ENCODE measurements at regions of chr17 and their contacts with region 1.

Region 1: GRCh38 chr17:66508896-66509843 is 206.8 kb downstream of the PRKCA start:
- DNase-seq: peak; percentile 90
- H3K4me3 Mint-ChIP-seq: peak overlapping the region; percentile 35
- H3K27ac Mint-ChIP-seq: peak overlapping the region; percentile 79
- H3K4me1 Mint-ChIP-seq: peaks cover 41% of the 10 kb centered on the region
- H3K27me3 Mint-ChIP-seq: no peaks in the 10 kb centered on the region
- CTCF ChIP-seq: no peak

Region 2: GRCh38 chr17:66301797-66302741 is 207.1 kb before region 1 on chr17 and contains the start of gene PRKCA:
- CTCF ChIA-PET with region 1: no interaction called
- POLR2A ChIA-PET with region 1: interaction called, 6 read pairs
- intact Hi-C with region 1: loop called (anchors 2 kb)
- DNase-seq: peak; percentile 63
- H3K4me3 Mint-ChIP-seq: peak within 1 kb of the TSS; percentile 96
- H3K27ac Mint-ChIP-seq: peak within 1 kb of the TSS; percentile 97
- H3K4me1 Mint-ChIP-seq: peaks cover 35% of the 10 kb centered on the region
- H3K27me3 Mint-ChIP-seq: no peaks in the 10 kb centered on the region
- CTCF ChIP-seq: no peak
- total RNA-seq, gene PRKCA: 20.7 and 22.8 TPM in 2 replicates

Region 3: DNA sequence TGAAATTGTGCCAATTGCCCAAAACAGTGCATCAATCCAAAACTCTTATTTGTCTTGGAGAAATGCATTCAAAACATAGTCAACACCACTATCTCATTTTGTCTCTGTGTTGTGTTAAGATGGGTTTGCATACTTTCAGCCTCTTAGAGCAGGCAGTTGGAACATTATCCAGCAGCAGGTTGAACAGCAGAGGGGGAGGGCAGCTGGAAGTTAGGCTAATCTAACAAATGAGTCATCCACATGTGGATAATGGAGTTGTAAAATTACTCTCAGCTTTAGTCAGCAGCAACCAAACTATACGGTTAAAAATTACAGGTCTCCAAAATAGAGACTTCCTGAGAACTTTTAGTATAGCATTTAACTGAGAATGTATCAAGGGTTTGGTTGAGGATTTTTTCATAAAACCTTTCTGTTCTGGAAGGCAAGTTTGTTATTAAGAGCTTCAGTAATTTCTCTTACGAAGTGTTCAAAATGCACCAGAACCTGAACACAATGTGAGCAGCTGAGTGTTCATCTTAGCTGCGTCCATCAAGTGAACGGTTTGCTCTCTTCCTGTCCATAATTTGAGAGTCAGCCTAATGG is 160.5 kb before region 1 on chr17:
- CTCF ChIA-PET with region 1: no interaction called
- POLR2A ChIA-PET with region 1: no interaction called
- intact Hi-C with region 1: no loop called
- DNase-seq: peak; percentile 70
- H3K4me3 Mint-ChIP-seq: no peak overlapping the region
- H3K27ac Mint-ChIP-seq: peak overlapping the region; percentile 36
- H3K4me1 Mint-ChIP-seq: peaks cover 25% of the 10 kb centered on the region
- H3K27me3 Mint-ChIP-seq: no peaks in the 10 kb centered on the region
- CTCF ChIP-seq: no peak

Measured in MCF 10A (cell line).